ENCODE measurements at regions of chr5 and their contacts with region 1.

Region 1: DNA sequence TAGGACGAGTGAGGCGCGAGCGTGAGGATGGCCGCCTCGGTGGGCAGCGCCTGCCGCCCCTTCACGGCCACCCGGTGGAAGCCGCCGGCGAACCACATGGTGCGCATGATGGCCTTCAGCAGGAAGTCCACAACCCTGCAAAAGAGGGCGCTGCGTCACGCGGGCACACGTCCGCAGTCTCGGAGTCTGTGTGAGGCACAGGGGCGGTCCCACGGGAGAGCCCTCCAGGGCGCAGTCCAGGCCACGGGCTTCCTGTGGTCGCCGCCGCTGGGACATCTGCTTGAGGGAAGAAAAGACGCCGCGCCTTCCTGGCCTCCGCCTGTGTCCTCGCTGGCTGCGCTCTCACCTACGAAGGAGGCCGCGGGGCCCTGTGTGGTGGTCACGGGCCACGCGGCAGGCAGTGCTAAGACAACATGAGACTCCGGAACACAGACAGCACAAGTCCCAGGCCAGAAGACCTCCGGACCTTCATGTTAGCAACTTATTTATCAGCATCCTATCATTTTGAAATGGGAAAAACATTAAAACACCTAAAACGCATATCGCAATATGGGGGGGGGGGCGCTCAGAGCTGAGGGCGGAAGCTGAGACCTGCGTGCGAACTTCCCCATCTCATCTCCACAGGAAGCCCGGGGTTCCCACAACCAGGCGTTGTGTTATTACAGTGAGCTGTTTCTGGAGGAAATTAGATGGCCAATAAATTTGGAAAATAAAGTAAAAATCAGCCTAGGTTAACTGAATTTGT is 28.8 kb downstream of the LPCAT1 start:
- DNase-seq: peak; percentile 74
- ATAC-seq: peak; percentile 53
- H3K4me3 ChIP-seq: peak overlapping the region; percentile 59; the same call in 1 of the 2 replicates
- H3K27ac ChIP-seq: peak overlapping the region; percentile 87
- H3K4me1 ChIP-seq: peaks cover 87% of the 10 kb centered on the region
- H3K27me3 ChIP-seq: no peaks in the 10 kb centered on the region
- CTCF ChIP-seq: peak; percentile 14 to 67 (median 24); a peak in 3 of 6 replicates
- EP300 ChIP-seq: peak; percentile 71 to 84
- POLR2A ChIP-seq: no peak
- RAD21 ChIP-seq: 0 out of 2 replicates have a peak, but pooled peaks have one; percentile 25

Region 2: GRCh38 chr5:1315709-1316587 is 179.0 kb before region 1 on chr5:
- CTCF ChIA-PET with region 1: no interaction called
- POLR2A ChIA-PET with region 1: interaction called, 3 read pairs
- RAD21 ChIA-PET with region 1: interaction called, 7 read pairs
- SMC1A ChIA-PET with region 1: interaction called, 3 read pairs
- in situ Hi-C with region 1: no loop called
- intact Hi-C with region 1: loop called (anchors 5 kb)
- DNase-seq: peak; percentile 69
- ATAC-seq: peak; percentile 66
- H3K4me3 ChIP-seq: peak overlapping the region; percentile 40; the same call in 1 of the 2 replicates
- H3K27ac ChIP-seq: peak overlapping the region; percentile 79
- H3K4me1 ChIP-seq: peaks cover 50% of the 10 kb centered on the region
- H3K27me3 ChIP-seq: no peaks in the 10 kb centered on the region
- CTCF ChIP-seq: no peak
- EP300 ChIP-seq: peak; percentile 68 to 97; a peak in 3 of 4 replicates
- POLR2A ChIP-seq: peak; percentile 71; the same call in 1 of the 2 replicates
- RAD21 ChIP-seq: 0 out of 2 replicates have a peak, but pooled peaks have one; percentile 12

Region 3: GRCh38 chr5:1344975-1345838 is 149.7 kb before region 1 on chr5 and contains the start of gene CLPTM1L:
- CTCF ChIA-PET with region 1: no interaction called
- POLR2A ChIA-PET with region 1: no interaction called
- RAD21 ChIA-PET with region 1: no interaction called
- SMC1A ChIA-PET with region 1: no interaction called
- in situ Hi-C with region 1: no loop called
- intact Hi-C with region 1: loop called (anchors 10 kb)
- DNase-seq: peak; percentile 50
- ATAC-seq: peak; percentile 79
- H3K4me3 ChIP-seq: peak within 1 kb of the TSS; percentile 98
- H3K27ac ChIP-seq: peak within 1 kb of the TSS; percentile 68
- H3K4me1 ChIP-seq: peaks cover 28% of the 10 kb centered on the region
- H3K27me3 ChIP-seq: no peaks in the 10 kb centered on the region
- CTCF ChIP-seq: no peak
- EP300 ChIP-seq: no peak
- POLR2A ChIP-seq: peak; percentile 87
- RAD21 ChIP-seq: no peak
- polyA plus RNA-seq, gene CLPTM1L: 2.9 to 22.8 TPM

Region 4: GRCh38 chr5:1479581-1480188 is 15.3 kb before region 1 on chr5:
- CTCF ChIA-PET with region 1: interaction called, 43 read pairs
- POLR2A ChIA-PET with region 1: interaction called, 108 read pairs
- RAD21 ChIA-PET with region 1: interaction called, 41 read pairs
- SMC1A ChIA-PET with region 1: interaction called, 93 read pairs
- in situ Hi-C with region 1: no loop called
- intact Hi-C with region 1: no loop called
- DNase-seq: no peak
- ATAC-seq: peak; percentile 35
- H3K4me3 ChIP-seq: no peak overlapping the region
- H3K27ac ChIP-seq: peak overlapping the region; percentile 5; the same call in 1 of the 2 replicates
- H3K4me1 ChIP-seq: peaks cover 25% of the 10 kb centered on the region
- H3K27me3 ChIP-seq: no peaks in the 10 kb centered on the region
- CTCF ChIP-seq: peak; percentile 77 to 82 (median 78)
- EP300 ChIP-seq: no peak
- POLR2A ChIP-seq: peak; percentile 41; the same call in 1 of the 2 replicates
- RAD21 ChIP-seq: peak; percentile 80

Region 5: GRCh38 chr5:1523771-1524480 is 29.0 kb after region 1 on chr5 and contains the start of gene LPCAT1:
- CTCF ChIA-PET with region 1: interaction called, 5 read pairs
- POLR2A ChIA-PET with region 1: interaction called, 17 read pairs
- RAD21 ChIA-PET with region 1: interaction called, 13 read pairs
- SMC1A ChIA-PET with region 1: interaction called, 14 read pairs
- in situ Hi-C with region 1: no loop called
- intact Hi-C with region 1: no loop called
- DNase-seq: no peak
- ATAC-seq: peak; percentile 89
- H3K4me3 ChIP-seq: peak within 1 kb of the TSS; percentile 88
- H3K27ac ChIP-seq: peak within 1 kb of the TSS; percentile 78
- H3K4me1 ChIP-seq: peaks cover 16% of the 10 kb centered on the region
- H3K27me3 ChIP-seq: no peaks in the 10 kb centered on the region
- CTCF ChIP-seq: 0 out of 6 replicates have a peak, but pooled peaks of 1 of the 3 experiments have one; percentile 5
- EP300 ChIP-seq: no peak
- POLR2A ChIP-seq: peak; percentile 86
- RAD21 ChIP-seq: no peak
- polyA plus RNA-seq, gene LPCAT1: 2.3 to 7.0 TPM

Region 6: GRCh38 chr5:1536322-1536845 is 41.4 kb after region 1 on chr5:
- CTCF ChIA-PET with region 1: interaction called, 7 read pairs
- POLR2A ChIA-PET with region 1: interaction called, 11 read pairs
- RAD21 ChIA-PET with region 1: interaction called, 18 read pairs
- SMC1A ChIA-PET with region 1: interaction called, 9 read pairs
- in situ Hi-C with region 1: no loop called
- intact Hi-C with region 1: no loop called
- DNase-seq: peak; percentile 72
- ATAC-seq: peak; percentile 99
- H3K4me3 ChIP-seq: peak overlapping the region; percentile 41; the same call in 1 of the 2 replicates
- H3K27ac ChIP-seq: peak overlapping the region; percentile 54
- H3K4me1 ChIP-seq: peaks cover 9% of the 10 kb centered on the region; the same call in 1 of the 2 replicates
- H3K27me3 ChIP-seq: no peaks in the 10 kb centered on the region
- CTCF ChIP-seq: no peak
- EP300 ChIP-seq: no peak
- POLR2A ChIP-seq: peak; percentile 63
- RAD21 ChIP-seq: no peak

Region 7: GRCh38 chr5:1792842-1793266 is 297.9 kb after region 1 on chr5:
- CTCF ChIA-PET with region 1: no interaction called
- POLR2A ChIA-PET with region 1: interaction called, 3 read pairs
- RAD21 ChIA-PET with region 1: interaction called, 3 read pairs
- SMC1A ChIA-PET with region 1: no interaction called
- in situ Hi-C with region 1: no loop called
- intact Hi-C with region 1: loop called (anchors 2 kb)
- DNase-seq: peak; percentile 99
- ATAC-seq: peak; percentile 94
- H3K4me3 ChIP-seq: peak overlapping the region; percentile 56; the same call in 1 of the 2 replicates
- H3K27ac ChIP-seq: peak overlapping the region; percentile 92
- H3K4me1 ChIP-seq: peaks cover 58% of the 10 kb centered on the region
- H3K27me3 ChIP-seq: no peaks in the 10 kb centered on the region
- CTCF ChIP-seq: no peak
- EP300 ChIP-seq: peak; percentile 85 to 97
- POLR2A ChIP-seq: peak; percentile 63
- RAD21 ChIP-seq: 0 out of 2 replicates have a peak, but pooled peaks have one; percentile 23